Activated CD4-positive, alpha-beta T cell treated with anti-CD3 and anti-CD28 coated beads, Interleukin-2, amount 10 ng/mL, durations not matched to agents 24 days and 14 days (primary cell): ENCODE measurements at regions of chr2 and their contacts with region 1.

Region 1: DNA sequence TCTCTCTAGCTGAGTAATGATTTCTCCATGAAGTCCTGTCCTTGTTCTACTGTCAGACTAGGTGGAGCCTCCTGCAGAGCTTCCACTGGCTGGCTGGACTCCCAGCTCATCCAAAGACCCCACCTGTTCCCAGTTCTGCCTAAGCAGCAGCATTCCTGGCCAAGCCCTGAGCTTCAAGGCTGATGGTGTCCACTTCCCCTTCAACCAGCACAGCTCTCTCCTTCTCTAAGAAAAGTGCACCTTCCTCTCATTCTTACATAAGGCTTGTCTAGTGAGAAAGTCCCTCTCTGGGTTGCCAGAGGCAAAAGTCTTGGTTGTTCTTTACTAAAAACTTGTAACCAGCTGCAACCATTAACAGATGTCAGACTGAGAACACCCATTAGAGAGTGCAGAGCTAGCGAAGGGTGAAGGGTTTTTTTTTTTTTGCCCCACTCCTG is 58.9 kb downstream of the CXCR4 start:
- DNase-seq: peak; percentile 60
- H3K4me3 Mint-ChIP-seq: peak overlapping the region; percentile 21
- H3K27ac Mint-ChIP-seq: peak overlapping the region; percentile 9
- H3K4me1 Mint-ChIP-seq: peaks cover 70% of the 10 kb centered on the region
- H3K27me3 Mint-ChIP-seq: no peaks in the 10 kb centered on the region

Region 2: DNA sequence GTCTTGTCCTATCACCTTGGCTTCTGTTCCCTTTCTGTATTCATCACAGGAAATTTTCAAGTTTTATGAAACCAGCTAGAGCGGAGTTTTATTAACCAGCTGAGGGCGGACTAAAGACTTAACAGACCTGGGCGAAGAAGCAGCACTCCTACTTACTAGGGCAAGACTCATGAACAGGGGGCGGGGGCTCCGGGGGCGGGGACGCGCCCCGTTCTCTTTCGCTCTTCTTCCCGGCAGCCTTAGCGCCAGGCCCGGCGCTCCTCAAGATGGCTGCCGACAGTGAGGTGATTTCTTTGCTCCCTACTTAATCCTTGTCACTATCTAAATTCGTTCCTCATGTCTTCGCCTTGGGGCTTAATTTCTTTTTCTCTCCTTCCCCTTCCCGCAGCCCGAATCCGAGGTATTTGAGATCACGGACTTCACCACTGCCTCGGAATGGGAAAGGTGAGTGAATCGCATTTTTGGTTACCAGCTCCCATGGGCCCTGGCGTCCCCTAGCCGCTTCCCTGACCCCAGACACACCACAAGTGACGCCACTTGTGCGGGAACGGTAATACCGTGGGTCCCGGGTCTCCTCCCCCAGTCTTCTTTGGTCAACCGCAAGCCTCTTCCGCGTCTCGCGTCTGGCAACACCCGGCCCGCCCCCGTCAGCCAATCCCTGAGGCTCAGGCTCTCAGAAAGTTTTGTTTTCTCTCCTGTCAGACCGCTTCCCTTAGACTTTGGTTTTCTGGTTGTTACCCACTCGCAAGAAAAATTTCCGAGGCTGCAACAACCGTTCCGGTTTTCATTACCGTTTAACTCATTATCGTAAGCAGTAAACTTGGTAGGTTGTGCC is 1006.8 kb before region 1 on chr2 and contains the start of gene RAB3GAP1:
- intact Hi-C with region 1: loop called (anchors 2 kb)
- DNase-seq: peak; percentile 98
- H3K4me3 Mint-ChIP-seq: peak within 1 kb of the TSS; percentile 94
- H3K27ac Mint-ChIP-seq: peak within 1 kb of the TSS; percentile 100
- H3K4me1 Mint-ChIP-seq: peaks cover 38% of the 10 kb centered on the region
- H3K27me3 Mint-ChIP-seq: peaks cover 2% of the 10 kb centered on the region
- total RNA-seq, gene RAB3GAP1: 24.2 and 26.3 TPM in 2 replicates

Region 3: GRCh38 chr2:135913727-135914365 is 145.2 kb before region 1 on chr2:
- intact Hi-C with region 1: loop called (anchors 2 kb)
- DNase-seq: peak; percentile 86
- H3K4me3 Mint-ChIP-seq: no peak overlapping the region
- H3K27ac Mint-ChIP-seq: no peak overlapping the region
- H3K4me1 Mint-ChIP-seq: peaks cover 18% of the 10 kb centered on the region
- H3K27me3 Mint-ChIP-seq: no peaks in the 10 kb centered on the region

Region 4: DNA sequence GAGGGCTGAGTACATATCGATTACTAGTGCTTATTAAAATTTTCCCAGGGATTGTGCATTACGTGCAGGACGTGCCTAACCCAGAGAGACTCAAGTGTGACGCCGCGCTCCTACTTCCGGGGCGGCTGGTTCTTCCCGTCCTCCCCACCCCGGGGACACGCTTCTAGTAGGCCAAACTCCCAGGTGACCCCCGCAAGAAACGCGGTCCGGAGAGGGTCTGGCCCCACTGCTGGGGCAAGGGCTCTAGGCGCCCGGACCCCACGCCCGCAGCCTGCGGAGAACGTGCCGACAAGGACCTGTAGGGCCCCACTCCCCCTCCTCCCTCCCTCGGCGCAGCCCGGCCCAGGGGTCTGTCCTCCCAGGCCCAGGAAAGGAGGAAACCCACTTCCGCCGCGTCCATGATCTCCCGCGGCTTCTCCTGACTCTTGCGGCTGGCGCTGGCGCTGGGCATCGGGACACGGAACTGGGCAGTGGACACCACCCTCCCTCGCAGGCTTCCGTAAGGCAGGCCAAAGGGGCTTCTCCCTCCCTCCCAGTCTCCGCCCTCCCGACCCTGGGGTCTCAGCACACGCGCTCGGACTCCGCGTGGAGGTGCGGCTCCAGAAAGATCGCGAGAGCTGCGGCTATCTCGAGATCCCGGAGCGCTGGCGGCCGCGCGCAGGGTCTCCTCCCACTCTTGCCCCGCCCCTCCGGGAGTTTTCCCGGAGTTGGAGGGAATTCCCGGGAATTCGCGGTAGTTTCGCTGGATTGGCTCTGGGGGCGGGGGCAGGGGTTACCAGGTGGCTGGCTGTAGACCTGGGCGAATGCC is 73.8 kb before region 1 on chr2 and contains the start of gene DARS1:
- intact Hi-C with region 1: loop called (anchors 1 kb)
- DNase-seq: peak; percentile 95
- H3K4me3 Mint-ChIP-seq: peak within 1 kb of the TSS; percentile 93
- H3K27ac Mint-ChIP-seq: peak within 1 kb of the TSS; percentile 100
- H3K4me1 Mint-ChIP-seq: peaks cover 48% of the 10 kb centered on the region
- H3K27me3 Mint-ChIP-seq: no peaks in the 10 kb centered on the region
- total RNA-seq, gene DARS1: 153 and 160 TPM in 2 replicates

Region 5: DNA sequence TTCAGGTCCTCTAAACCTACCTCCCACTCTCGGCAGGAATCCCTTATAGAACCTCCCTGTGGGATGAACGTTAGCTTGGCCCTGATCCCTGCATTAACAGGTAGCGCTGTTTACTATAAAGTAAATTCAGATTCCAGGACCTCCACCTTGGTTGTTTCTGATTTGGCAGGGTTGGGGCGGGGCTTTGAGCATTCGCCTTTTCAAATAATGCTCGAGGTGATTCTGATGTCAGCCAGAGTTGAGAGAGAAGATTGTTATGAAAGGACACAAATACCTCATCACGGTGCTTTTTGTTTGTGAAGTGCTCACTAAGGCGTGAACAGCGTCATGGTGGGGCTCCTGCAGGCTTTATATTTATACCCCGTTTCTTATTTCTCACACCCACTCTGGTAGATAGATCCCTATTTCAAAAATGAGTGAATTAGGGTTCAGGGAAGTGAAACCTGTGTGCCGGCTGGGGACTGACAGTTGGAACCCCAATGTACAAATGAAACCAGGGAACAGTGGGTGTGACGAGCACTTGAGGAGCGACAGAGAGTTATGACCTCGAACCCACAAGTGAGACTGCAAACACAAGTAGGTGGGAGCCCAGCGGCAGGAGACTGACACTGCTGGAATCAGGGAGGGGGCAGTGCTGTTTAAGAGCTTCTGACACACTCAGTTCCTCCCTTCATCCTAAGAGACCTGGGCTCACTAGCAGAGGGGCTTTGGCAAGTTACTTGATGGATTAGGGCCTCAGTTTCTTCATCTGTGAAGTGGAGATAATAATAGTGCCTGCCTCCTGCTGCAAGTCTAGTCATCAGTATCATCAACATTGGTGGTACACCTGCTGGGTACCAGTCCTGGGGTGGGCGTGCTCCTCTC is 73.1 kb after region 1 on chr2:
- intact Hi-C with region 1: loop called (anchors 1 kb)
- DNase-seq: peak; percentile 91
- H3K4me3 Mint-ChIP-seq: peak overlapping the region; percentile 76
- H3K27ac Mint-ChIP-seq: peak overlapping the region; percentile 81
- H3K4me1 Mint-ChIP-seq: peaks cover 88% of the 10 kb centered on the region
- H3K27me3 Mint-ChIP-seq: peaks cover 23% of the 10 kb centered on the region

Region 6: DNA sequence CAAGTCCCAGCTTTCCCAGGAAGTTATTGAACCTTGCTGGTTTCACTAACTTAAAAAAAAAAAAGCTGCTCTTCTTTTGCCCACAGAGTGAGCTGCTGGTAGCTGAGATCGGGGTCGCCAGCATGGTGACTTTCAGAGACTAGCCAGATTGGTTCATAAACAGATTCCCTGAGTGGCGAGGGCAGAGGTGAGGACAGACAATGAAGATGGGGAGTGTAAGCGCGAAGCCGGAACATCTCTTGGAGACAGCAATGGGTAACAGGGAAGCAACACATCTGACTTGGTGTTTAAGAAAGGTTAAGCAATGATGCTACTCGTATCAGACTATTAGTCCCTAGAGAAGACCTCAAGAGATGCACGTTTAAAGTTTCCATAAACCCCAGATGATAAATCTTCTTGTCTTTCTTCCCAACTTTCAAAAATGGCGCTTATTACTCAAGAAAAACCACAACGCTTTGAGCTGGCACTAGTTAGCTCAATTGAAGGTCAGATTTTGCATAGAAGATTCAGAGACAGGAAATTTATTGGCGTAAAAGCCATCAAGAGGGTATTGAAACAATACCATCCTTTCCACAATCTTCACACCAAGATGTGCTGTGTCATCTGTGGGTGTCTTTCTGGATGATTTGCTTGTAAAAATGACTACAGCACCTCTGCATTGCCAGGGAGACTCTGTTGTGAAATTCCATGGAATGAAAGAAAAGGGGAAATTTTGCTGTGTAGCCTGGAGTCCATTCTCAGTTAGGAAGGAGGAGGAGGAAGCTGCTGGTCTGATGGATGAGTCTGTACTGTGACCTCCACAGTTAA is 251.9 kb after region 1 on chr2:
- intact Hi-C with region 1: loop called (anchors 1 kb)
- DNase-seq: no peak
- H3K4me3 Mint-ChIP-seq: peak overlapping the region; percentile 30
- H3K27ac Mint-ChIP-seq: peak overlapping the region; percentile 86
- H3K4me1 Mint-ChIP-seq: peaks cover 22% of the 10 kb centered on the region
- H3K27me3 Mint-ChIP-seq: no peaks in the 10 kb centered on the region

Region 7: DNA sequence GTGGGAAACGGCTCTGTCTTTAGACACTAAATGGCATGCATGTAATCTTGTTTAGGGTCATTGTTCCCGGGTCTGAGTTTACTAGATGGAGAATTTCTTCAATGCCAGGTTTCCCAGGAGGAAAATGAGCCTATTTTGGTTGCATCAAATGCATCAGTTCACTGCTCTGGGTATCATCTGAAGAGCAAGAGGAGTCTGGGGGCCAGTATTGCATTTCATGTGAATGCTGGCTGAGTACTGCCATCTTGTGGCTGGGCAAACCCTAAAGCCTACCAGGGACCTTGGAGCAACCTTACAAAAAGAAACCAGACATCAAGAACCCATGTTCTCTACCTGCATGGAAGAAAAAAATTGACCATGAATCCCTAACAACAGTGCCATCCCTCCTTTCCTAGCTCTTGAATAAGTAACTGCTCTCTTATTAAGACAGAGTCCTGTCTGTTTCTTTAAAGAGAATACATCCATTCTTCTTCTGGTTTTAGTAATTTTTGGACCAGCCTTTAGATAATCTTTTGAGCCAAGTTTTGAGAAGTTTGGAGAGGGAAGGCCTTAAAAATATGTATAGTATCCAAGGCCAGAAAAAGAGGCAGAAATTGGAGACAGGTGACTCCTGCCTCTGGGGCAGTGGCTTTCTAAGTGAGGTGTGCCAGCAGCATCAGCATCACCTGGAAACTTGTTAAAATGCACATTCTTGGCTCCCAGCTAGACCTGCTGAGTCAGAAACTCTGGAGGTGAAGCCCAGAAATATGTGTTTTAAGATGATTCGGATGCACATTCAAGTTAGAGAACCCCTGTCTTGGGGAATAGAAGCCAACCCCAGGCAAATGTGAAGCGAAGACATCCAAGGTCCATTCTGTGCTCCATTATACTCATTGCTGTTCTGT is 319.9 kb after region 1 on chr2:
- intact Hi-C with region 1: loop called (anchors 1 kb)
- DNase-seq: peak; percentile 93
- H3K4me3 Mint-ChIP-seq: no peak overlapping the region
- H3K27ac Mint-ChIP-seq: no peak overlapping the region
- H3K4me1 Mint-ChIP-seq: peaks cover 86% of the 10 kb centered on the region
- H3K27me3 Mint-ChIP-seq: no peaks in the 10 kb centered on the region

Region 8: GRCh38 chr2:136527560-136527959 is 468.5 kb after region 1 on chr2:
- intact Hi-C with region 1: no loop called
- DNase-seq: peak; percentile 73
- H3K4me3 Mint-ChIP-seq: no peak overlapping the region
- H3K27ac Mint-ChIP-seq: no peak overlapping the region
- H3K4me1 Mint-ChIP-seq: no peaks in the 10 kb centered on the region
- H3K27me3 Mint-ChIP-seq: no peaks in the 10 kb centered on the region